OCI-LY7 (cell line): ENCODE measurements at regions of chr3 and their contacts with region 1.

Region 1: GRCh38 chr3:2599471-2599870 is 500.8 kb downstream of the CNTN4 start:
- DNase-seq: no peak
- H3K4me3 ChIP-seq: no peak overlapping the region
- H3K27ac ChIP-seq: no peak overlapping the region
- H3K4me1 ChIP-seq: no peaks in the 10 kb centered on the region
- CTCF ChIP-seq: no peak

Region 2: GRCh38 chr3:1406250-1406649 is 1193.2 kb before region 1 on chr3:
- CTCF ChIA-PET with region 1: interaction called, 10 read pairs
- POLR2A ChIA-PET with region 1: no interaction called
- intact Hi-C with region 1: no loop called
- DNase-seq: no peak
- H3K4me3 ChIP-seq: no peak overlapping the region
- H3K27ac ChIP-seq: no peak overlapping the region
- H3K4me1 ChIP-seq: no peaks in the 10 kb centered on the region
- CTCF ChIP-seq: no peak

Region 3: DNA sequence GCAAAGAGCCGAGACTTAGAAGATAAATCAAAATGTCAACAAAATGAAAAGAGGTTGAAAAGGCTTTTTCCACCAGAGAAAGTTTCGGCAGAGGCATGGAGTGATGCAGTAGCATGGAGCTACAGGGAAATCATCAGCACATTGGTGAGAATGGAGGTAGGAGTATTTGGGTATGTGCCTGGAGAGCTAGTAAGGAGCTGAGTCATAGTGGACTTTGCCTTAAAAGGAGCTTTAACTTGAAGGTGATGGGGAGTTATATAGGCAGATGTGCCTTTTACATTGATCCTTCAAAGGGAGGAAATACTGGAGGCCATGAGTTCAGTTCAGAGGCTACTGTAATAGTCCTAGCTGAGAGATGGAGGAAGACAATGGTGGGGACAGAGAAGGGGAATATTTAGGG is 466.4 kb after region 1 on chr3:
- CTCF ChIA-PET with region 1: no interaction called
- POLR2A ChIA-PET with region 1: interaction called, 12 read pairs
- intact Hi-C with region 1: no loop called
- DNase-seq: no peak
- H3K4me3 ChIP-seq: no peak overlapping the region
- H3K27ac ChIP-seq: no peak overlapping the region
- H3K4me1 ChIP-seq: no peaks in the 10 kb centered on the region
- CTCF ChIP-seq: no peak